A673 (cell line): ENCODE measurements at regions of chr19 and their contacts with region 1.

Region 1: GRCh38 chr19:46392243-46392801 is 21.0 kb downstream of the CCDC8 start:
- DNase-seq: peak; percentile 74
- H3K4me3 ChIP-seq: no peak overlapping the region
- H3K27ac ChIP-seq: peak overlapping the region; percentile 66
- H3K4me1 ChIP-seq: peaks cover 31% of the 10 kb centered on the region
- H3K27me3 ChIP-seq: no peaks in the 10 kb centered on the region
- CTCF ChIP-seq: no peak

Region 2: DNA sequence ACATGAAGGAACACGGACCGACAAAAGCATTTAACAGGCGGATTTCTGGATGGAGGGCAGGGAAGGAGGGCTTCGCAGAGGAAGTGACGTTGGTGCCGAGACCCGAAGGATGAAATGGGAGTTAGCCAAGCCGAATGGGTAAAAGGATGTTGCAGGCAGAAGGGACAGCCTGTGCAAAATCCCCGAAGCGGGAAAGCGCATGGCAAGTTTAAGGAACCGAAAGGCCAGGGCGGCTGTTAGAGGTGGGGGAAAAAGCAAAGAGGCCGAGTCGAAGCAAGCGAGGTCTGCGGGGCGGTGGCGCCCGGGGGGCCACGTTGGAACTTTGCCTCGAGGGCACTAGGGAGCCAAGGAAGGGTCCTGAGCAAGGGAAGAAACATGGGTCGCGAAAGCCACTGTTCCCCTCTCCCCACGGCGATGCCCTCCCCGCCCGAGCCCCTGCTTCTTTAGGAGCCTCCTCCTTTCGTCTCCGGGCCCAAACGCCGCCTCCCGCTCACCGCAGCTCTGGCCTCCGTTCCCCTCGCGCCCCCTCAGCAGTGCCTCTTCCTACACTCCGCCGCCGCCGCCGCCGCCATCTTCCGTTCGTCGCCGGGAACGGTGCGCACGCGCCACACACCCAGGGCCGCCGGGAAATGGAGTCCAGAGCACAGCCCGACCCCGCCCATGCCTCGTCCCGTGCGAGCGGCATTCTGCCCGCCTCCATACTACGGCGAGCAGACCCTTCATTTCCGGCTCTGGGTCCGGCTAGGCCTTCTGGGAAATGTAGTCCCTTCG is 529.6 kb before region 1 on chr19 and contains the start of gene SYMPK:
- CTCF ChIA-PET with region 1: interaction called, 13 read pairs
- POLR2A ChIA-PET with region 1: no interaction called
- intact Hi-C with region 1: no loop called
- DNase-seq: peak; percentile 99
- H3K4me3 ChIP-seq: peak within 1 kb of the TSS; percentile 67
- H3K27ac ChIP-seq: peak within 1 kb of the TSS; percentile 91
- H3K4me1 ChIP-seq: peaks cover 6% of the 10 kb centered on the region
- H3K27me3 ChIP-seq: peaks cover 41% of the 10 kb centered on the region
- CTCF ChIP-seq: no peak
- total RNA-seq, gene SYMPK: 85.5 and 92.4 TPM in 2 replicates

Region 3: DNA sequence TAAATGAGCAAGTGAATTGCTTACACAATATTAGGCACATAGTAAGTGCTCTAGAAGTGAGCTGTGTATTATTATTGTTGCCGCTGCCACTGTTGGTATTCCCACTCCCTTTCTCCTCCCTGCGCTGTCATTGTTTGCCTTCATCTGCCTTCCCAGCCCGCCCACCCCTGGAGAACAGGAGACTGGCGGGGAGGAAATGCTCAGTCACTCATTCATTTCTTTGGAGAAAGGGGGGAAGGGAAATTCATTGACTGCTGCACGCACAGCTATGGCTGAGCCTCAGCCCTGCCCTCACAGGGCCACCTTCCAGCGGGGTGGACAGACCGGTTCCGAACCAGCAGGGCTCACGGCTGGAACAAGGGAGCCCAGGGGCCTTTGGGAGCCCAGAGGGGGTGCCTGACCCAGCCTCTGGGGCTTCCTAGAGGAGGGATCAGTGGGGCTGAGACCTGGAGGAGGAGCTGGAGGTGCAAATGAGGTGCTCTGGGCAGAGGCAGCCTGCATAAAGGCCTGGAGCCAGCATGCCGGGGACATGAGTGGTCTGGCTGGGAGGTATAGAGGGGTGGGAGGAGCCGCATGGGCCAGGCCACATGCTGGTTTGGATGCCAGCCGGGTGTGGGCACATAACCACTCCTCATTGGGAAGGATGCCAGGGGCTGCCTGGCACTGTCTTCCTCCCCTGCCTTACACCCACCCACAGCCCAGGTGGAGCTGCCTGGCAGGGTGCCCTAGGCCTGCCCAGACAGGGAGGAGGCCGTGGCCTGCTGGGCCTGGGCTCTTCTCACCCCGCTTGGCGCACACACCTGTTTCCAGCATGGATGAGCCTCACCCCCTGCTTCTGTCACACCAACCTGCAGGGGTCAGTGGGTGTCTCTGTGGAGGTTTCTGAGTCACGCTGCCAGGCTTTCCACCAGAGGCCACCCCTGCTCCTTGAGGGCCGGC is 18.6 kb before region 1 on chr19:
- CTCF ChIA-PET with region 1: no interaction called
- POLR2A ChIA-PET with region 1: no interaction called
- intact Hi-C with region 1: loop called (anchors 1 kb)
- DNase-seq: peak; percentile 72
- H3K4me3 ChIP-seq: no peak overlapping the region
- H3K27ac ChIP-seq: peak overlapping the region; percentile 80
- H3K4me1 ChIP-seq: peaks cover 35% of the 10 kb centered on the region
- H3K27me3 ChIP-seq: no peaks in the 10 kb centered on the region
- CTCF ChIP-seq: 0 out of 2 replicates have a peak, but pooled peaks have one; percentile 8

Region 4: DNA sequence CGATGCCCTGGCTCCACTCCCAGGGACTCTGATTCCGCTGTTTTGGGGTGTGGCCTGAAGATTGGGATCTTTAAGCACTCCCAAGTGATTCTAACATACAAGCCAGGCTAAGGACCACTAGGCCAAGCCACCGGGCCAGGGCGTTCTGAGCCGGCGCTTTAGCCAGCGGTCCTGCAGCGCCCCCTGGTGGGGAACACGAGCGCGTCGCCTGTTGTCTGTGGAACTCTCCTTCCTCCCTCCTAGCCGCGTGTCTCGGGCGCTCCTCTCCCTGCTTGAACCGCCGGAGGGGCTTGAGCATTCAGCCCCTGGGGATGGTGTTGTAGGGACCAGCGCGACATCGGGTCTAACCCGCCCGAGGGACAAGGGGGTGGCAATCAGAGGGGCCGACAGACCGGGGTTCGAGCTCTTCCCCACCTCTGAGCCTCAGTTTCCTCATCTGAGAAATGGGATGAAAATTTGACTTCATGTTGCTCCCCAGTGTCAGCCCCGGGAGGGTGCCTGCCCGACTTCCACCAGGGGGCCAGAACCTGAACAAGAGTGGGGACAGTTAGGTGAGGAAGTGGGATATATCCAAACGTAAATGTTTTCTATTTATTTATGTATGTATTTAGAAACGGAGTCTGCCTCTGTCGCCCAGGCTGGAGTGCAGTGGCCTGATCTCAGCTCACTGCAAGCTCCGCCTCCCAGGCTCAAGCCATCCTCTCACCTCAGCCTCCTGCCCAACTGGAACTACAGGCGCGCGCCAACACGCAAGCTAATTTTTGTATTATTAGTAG is 121.3 kb after region 1 on chr19:
- CTCF ChIA-PET with region 1: interaction called, 5 read pairs
- POLR2A ChIA-PET with region 1: no interaction called
- intact Hi-C with region 1: loop called (anchors 1 kb)
- DNase-seq: peak; percentile 86
- H3K4me3 ChIP-seq: no peak overlapping the region
- H3K27ac ChIP-seq: no peak overlapping the region
- H3K4me1 ChIP-seq: no peaks in the 10 kb centered on the region
- H3K27me3 ChIP-seq: no peaks in the 10 kb centered on the region
- CTCF ChIP-seq: peak; percentile 97

Region 5: DNA sequence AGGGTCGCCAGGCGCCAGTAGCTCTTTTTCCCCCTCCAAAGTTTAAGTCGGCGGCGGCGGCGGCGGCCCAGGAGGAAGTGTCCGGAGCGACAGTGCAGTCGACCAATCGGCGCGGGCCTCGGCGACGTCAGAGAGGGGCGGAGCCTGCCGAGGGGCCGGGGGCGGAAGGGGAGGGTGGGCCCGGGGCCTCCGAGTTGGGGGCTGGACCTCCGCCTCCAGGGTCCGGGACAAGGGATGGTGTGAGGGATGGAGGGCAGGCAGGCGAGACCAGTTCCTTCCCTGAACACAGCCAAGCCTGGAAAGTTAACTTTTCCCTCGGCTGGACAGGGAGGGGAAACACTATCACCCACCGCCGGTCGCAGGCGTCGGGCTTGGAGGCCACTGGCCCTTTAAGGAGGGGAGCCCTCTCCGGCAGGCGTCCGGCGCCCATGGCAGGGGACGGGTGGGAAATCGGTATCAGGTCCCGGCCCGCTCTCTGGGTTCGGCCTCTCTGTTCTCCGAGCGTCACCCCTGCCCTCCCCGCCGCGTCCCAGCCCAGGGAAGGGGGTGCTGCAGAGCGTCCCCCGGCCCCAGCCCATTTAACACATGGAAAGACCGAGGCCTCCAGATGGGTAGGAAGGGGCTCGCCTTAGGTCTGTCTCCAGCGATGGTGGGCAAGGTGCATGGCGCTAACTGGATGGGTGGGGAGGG is 324.9 kb after region 1 on chr19 and contains the start of gene PRKD2:
- CTCF ChIA-PET with region 1: no interaction called
- POLR2A ChIA-PET with region 1: no interaction called
- intact Hi-C with region 1: no loop called
- DNase-seq: peak; percentile 86
- H3K4me3 ChIP-seq: peak within 1 kb of the TSS; percentile 73
- H3K27ac ChIP-seq: peak within 1 kb of the TSS; percentile 80
- H3K4me1 ChIP-seq: peaks cover 20% of the 10 kb centered on the region
- H3K27me3 ChIP-seq: no peaks in the 10 kb centered on the region
- CTCF ChIP-seq: no peak
- total RNA-seq, gene PRKD2: 45.1 and 60.3 TPM in 2 replicates